AG04449 (cell line): ENCODE measurements at regions of chr2 and their contacts with region 1.

Region 1: DNA sequence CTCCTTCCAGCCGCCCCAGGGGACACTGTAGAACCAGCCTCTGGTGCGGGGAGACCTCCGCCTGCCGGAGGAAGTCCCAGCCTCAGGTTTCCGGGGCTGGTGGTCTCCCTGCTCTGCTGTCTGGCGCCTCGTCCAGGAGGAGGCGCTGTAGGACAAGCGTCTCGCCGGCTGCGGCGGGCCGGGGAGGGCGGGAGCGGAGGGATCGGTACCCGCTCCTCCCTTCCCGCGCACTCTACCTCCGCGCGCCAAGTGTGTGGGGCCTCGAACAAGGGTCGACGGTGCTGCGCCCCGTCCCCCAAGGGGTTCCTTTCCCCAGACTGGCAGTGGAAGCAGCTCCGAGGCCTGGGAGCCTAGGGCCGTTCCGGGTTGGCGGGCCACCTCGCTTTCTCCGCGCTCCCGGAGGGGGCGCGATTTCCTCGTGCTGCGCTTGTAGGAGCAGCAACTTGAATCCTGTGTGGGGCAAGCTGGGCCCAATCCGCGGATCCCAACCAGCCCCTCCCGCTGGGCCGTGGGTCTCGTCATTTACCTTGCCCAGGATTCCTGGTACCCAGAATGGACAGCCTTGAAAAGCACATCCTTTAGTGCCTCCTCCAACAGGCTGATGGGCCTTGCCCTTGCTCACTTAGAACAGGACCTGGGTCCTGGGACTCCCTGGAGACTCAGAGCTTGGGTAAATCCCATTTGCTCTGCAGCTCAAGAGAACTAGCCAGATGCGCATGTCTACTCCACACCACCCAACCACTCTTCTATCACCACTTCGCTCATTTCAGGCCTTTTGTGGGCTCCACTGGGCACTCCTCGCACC is 10.6 kb upstream of the HOXD4 start:
- DNase-seq: no peak
- H3K4me3 ChIP-seq: peak overlapping the region; percentile 71
- CTCF ChIP-seq: peak; percentile 98

Region 2: DNA sequence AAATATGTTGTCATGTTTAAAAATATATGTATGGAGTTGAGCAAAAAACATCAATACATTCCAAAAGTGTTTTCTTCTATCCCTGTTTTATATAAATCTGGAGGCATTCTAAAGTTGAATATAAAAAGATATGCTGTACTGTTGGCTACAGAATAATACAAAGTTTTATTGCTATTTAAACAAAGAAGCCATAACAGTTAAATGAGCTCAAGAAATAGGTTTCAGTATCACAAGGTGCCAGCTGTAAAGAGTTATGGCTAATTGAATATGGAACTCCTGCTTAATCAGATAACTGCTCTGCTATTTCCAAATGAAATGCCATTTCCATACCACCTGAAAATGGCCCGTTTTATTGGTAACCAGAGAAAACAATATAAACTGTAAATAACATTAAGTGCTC is 193.6 kb before region 1 on chr2:
- CTCF ChIA-PET with region 1: no interaction called
- POLR2A ChIA-PET with region 1: no interaction called
- DNase-seq: no peak
- H3K4me3 ChIP-seq: no peak overlapping the region
- CTCF ChIP-seq: no peak

Region 3: DNA sequence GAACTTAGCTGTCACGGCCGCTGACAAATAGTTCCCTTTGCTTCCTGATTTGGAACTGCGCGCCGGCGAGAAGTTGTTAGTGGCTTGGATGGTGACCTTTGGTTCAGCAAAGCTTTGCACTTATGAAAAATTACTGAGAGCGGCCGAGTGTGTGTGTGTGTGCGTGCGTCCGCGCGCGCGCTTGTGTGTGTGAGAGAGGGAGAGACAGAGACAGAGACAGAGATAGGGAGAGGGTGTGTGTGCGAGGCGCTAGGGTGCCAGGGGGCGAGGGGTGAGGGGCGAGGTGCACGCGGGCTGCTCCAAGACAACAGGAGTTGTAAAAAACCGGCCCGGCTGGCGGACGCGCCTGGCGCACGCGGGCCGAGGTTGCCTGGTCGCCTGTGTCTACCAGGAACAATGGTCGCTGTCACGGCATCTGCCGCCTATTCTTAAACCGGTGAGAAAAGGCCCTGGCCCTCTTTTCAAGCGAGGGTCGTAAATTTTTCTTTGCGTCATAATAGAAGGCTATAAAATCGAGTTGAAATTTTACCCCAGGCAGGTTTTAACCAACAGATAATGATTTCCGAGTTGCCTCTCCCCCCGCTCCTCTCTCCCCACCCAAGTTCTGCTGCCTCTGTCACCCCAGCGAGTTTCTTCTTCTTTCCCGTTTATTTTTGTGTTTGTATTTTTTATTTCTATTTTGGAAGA is 16.9 kb after region 1 on chr2:
- CTCF ChIA-PET with region 1: interaction called, 190 read pairs
- POLR2A ChIA-PET with region 1: interaction called, 5 read pairs
- DNase-seq: no peak
- H3K4me3 ChIP-seq: peak overlapping the region; percentile 57
- CTCF ChIP-seq: no peak

Region 4: DNA sequence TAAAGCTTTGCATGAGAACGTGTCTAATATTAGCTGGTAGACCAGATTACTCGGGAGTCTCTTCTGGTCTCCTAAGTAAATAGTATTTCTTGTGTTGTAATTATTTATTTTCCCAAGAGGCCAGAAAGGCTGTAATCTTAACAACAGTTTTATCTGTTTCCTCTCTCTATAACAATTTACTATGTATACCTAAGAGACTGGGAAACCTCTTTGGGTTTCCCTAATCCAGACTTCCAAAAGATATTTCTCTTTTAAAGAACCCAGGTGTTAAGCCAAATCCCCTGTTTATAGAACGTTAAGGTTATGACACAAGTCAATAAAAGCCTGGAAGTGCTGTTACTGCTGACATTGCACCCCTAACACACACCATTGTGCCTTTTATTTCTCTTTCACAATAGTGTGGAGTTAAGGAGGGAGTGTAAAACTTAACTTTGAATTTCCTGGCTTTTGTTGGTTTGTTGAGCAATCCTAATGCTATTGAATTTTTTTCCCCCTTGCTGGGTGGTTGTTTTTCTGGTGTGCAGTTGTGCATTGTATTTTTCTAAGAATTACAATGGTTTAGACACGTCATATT is 321.2 kb after region 1 on chr2:
- CTCF ChIA-PET with region 1: interaction called, 315 read pairs
- POLR2A ChIA-PET with region 1: no interaction called
- DNase-seq: no peak
- H3K4me3 ChIP-seq: no peak overlapping the region
- CTCF ChIP-seq: no peak

Region 5: GRCh38 chr2:176565641-176566323 is 425.1 kb after region 1 on chr2:
- CTCF ChIA-PET with region 1: interaction called, 49 read pairs
- POLR2A ChIA-PET with region 1: no interaction called
- DNase-seq: no peak
- H3K4me3 ChIP-seq: no peak overlapping the region
- CTCF ChIP-seq: no peak

Region 6: GRCh38 chr2:176613323-176613987 is 472.7 kb after region 1 on chr2:
- CTCF ChIA-PET with region 1: interaction called, 14 read pairs
- POLR2A ChIA-PET with region 1: no interaction called
- DNase-seq: peak; percentile 37
- H3K4me3 ChIP-seq: no peak overlapping the region
- CTCF ChIP-seq: no peak